ENCODE measurements at regions of chr19 and their contacts with region 1.

Region 1: DNA sequence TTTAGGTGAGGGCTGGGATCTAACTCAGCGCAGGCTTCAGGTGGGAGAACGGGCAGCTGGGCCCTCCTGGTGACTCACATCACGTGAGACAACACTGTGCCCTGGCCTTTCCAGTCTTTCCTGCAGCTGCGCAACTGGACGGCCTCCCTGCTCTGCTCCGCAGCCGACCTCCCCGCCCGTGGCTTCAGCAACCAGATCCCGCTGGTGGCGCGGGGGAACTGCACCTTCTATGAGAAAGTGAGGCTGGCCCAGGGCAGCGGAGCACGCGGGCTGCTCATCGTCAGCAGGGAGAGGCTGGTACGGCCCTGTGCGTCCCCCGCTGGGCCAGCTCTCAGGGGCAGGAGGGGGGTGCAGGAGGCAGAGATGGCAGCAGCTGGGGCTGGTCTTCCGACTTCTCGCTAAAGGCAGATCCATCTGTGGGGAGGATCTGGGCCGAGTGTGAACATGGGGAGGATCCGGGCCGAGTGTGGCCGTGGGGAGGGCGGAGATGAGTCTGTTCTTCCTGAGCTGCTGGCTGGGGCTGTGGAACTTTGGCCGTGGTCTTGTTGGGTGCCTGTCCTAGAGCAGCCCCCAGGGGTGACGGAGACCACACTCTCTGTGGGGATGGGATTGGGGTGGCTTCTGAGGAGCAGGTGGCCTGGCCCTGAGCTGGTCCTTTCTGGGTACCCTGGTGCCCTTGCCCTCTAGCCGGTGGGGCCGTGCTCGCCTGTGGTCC is 9.0 kb downstream of the SPPL2B start:
- DNase-seq: no peak
- ATAC-seq: no peak
- H3K4me3 ChIP-seq: no peak overlapping the region
- H3K4me3 Mint-ChIP-seq: no peak overlapping the region
- H3K27ac ChIP-seq: no peak overlapping the region
- H3K27ac Mint-ChIP-seq: no peak overlapping the region
- H3K4me1 ChIP-seq: peaks cover 19% of the 10 kb centered on the region
- H3K4me1 Mint-ChIP-seq: peaks cover 17% of the 10 kb centered on the region
- H3K27me3 ChIP-seq: no peaks in the 10 kb centered on the region
- H3K27me3 Mint-ChIP-seq: no peaks in the 10 kb centered on the region
- CTCF ChIP-seq: no peak

Region 2: DNA sequence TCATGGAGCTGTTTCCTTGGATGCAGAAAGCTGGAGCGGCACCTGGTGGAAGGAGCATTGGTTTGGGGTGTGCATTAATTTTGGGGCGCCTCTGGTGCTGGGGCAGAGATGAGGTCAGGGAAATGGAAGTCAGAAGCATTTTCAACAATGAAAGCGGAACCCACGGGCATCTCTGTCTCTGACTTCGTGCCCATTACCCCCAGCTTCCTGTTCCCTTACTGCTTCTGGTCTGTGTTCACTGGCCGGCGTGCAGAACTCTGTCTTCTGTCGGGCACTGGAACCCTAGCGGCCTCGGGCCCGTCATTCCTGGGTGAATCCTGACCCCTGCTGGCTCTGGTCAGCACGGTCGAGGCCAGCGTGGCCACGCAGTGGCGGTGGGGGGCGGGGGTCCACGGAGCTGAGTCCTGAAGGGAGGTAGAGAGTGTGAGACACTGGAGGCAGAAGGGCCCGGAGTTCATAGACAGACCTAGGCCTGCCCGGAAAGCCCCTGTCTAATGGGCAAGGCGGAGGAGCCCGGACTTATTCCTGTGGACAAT is 21.6 kb before region 1 on chr19:
- CTCF ChIA-PET with region 1: no interaction called
- POLR2A ChIA-PET with region 1: no interaction called
- intact Hi-C with region 1: loop called in 1 of 2 experiments (anchors 1 kb)
- DNase-seq: peak in 4 of 9 experiments; percentile 29 to 66 (median 51)
- ATAC-seq: no peak
- H3K4me3 ChIP-seq: no peak overlapping the region
- H3K4me3 Mint-ChIP-seq: no peak overlapping the region
- H3K27ac ChIP-seq: no peak overlapping the region
- H3K27ac Mint-ChIP-seq: no peak overlapping the region
- H3K4me1 ChIP-seq: peaks cover 6% of the 10 kb centered on the region
- H3K4me1 Mint-ChIP-seq: no peaks in the 10 kb centered on the region
- H3K27me3 ChIP-seq: peaks cover 6 to 10% of the 10 kb centered on the region in 2 experiments
- H3K27me3 Mint-ChIP-seq: peaks cover 20% of the 10 kb centered on the region
- CTCF ChIP-seq: no peak

Region 3: GRCh38 chr19:2648528-2648937 is 311.0 kb after region 1 on chr19:
- CTCF ChIA-PET with region 1: no interaction called
- POLR2A ChIA-PET with region 1: no interaction called
- intact Hi-C with region 1: no loop called
- DNase-seq: peak; percentile 53 to 84 (median 76)
- ATAC-seq: peak; percentile 99
- H3K4me3 ChIP-seq: no peak overlapping the region
- H3K4me3 Mint-ChIP-seq: no peak overlapping the region
- H3K27ac ChIP-seq: no peak overlapping the region
- H3K27ac Mint-ChIP-seq: no peak overlapping the region
- H3K4me1 ChIP-seq: no peaks in the 10 kb centered on the region
- H3K4me1 Mint-ChIP-seq: peaks cover 2% of the 10 kb centered on the region
- H3K27me3 ChIP-seq: no peaks in the 10 kb centered on the region
- H3K27me3 Mint-ChIP-seq: no peaks in the 10 kb centered on the region
- CTCF ChIP-seq: peak; percentile 97

Measured in CD8-positive, alpha-beta T cell (primary cell).